Activated naive CD4-positive, alpha-beta T cell treated with anti-CD3 and anti-CD28 coated beads for 36 hours (primary cell): ENCODE measurements at regions of chr12 and their contacts with region 1.

Region 1: GRCh38 chr12:55926738-55927587 is 731 bp downstream of the PYM1 start:
- DNase-seq: peak; percentile 96
- H3K4me3 Mint-ChIP-seq: peak overlapping the region; percentile 99
- H3K27ac Mint-ChIP-seq: peak overlapping the region; percentile 100
- H3K4me1 Mint-ChIP-seq: peaks cover 44% of the 10 kb centered on the region
- H3K27me3 Mint-ChIP-seq: no peaks in the 10 kb centered on the region

Region 2: DNA sequence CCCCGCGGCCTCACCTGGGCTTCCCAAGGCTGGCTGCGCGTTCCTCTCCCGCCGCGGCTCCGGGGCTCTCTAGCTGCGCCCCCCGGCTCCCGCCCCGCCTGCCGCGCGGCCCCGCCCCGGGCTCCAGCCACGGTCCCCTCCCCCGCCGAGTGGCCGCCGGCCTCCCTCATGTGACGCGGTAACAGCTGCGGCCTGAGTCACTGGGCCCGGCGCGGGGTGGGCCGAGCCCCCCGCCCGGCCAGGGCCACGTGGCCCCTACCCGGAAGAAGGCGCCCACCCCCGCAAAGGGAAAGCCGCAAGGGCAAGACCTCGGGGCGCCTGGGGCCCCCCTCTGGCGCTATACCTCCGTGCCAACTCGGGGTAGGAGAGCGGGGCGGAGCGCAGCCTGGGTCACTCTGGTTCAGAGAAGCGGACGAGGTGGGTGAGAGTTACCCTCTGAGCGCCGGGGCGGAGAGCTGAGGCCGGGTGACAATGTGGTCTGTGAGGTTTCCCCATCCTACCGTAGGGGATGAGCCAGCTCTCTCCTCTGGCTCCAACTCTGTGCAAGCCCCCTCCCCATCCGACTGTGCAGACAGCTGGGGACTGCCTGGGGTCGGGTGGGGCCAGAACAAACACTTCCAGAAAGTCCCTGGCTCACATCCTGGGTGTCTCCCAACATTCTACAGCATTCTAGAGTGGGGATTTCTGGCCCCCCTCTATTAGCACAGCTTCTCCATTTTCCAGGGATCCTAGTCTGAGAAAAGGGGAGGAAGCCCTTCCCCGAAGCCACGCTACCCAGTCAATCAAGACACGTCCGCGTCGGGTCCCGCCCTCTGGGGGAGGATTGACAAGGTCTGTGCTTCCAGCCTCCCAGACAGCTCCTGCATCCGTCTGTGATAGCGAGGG is 197.8 kb before region 1 on chr12 and contains the start of gene CD63:
- CTCF ChIA-PET with region 1: interaction called, 5 read pairs
- intact Hi-C with region 1: loop called (anchors 2 kb)
- DNase-seq: peak; percentile 81
- H3K4me3 Mint-ChIP-seq: peak within 1 kb of the TSS; percentile 90
- H3K27ac Mint-ChIP-seq: peak within 1 kb of the TSS; percentile 87
- H3K4me1 Mint-ChIP-seq: peaks cover 29% of the 10 kb centered on the region
- H3K27me3 Mint-ChIP-seq: no peaks in the 10 kb centered on the region
- total RNA-seq, gene CD63: 62.3 to 73.6 TPM

Region 3: DNA sequence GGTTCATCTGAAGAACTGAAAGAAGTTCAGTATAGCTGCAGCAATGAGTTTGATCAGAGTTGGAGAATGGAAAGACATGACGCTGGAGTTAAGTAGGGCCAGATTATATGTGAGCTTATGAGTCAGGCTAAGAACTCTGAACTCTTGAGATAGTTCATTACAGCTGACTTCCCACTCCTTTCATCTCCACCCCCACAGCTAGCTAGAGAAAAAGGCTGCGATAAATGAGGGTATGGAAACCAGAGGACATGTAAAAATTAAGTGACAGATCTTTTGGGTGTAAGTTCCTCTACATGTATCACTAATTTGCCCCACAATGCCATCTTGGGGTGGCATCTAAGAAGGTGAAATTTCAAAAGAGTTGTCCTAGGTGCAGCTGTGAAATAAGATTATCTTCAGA is 27.9 kb before region 1 on chr12:
- CTCF ChIA-PET with region 1: interaction called, 6 read pairs
- intact Hi-C with region 1: loop called (anchors 2 kb)
- DNase-seq: peak; percentile 71
- H3K4me3 Mint-ChIP-seq: no peak overlapping the region
- H3K27ac Mint-ChIP-seq: peak overlapping the region; percentile 70
- H3K4me1 Mint-ChIP-seq: peaks cover 13% of the 10 kb centered on the region
- H3K27me3 Mint-ChIP-seq: no peaks in the 10 kb centered on the region

Region 4: GRCh38 chr12:55973598-55974307 is 46.8 kb after region 1 on chr12 and contains the start of gene RAB5B:
- CTCF ChIA-PET with region 1: interaction called, 5 read pairs
- intact Hi-C with region 1: loop called (anchors 1 kb)
- DNase-seq: peak; percentile 99
- H3K4me3 Mint-ChIP-seq: no peak within 1 kb of the TSS
- H3K27ac Mint-ChIP-seq: no peak within 1 kb of the TSS
- H3K4me1 Mint-ChIP-seq: peaks cover 24% of the 10 kb centered on the region
- H3K27me3 Mint-ChIP-seq: no peaks in the 10 kb centered on the region
- total RNA-seq, gene RAB5B: 33.2 to 35.7 TPM

Region 5: DNA sequence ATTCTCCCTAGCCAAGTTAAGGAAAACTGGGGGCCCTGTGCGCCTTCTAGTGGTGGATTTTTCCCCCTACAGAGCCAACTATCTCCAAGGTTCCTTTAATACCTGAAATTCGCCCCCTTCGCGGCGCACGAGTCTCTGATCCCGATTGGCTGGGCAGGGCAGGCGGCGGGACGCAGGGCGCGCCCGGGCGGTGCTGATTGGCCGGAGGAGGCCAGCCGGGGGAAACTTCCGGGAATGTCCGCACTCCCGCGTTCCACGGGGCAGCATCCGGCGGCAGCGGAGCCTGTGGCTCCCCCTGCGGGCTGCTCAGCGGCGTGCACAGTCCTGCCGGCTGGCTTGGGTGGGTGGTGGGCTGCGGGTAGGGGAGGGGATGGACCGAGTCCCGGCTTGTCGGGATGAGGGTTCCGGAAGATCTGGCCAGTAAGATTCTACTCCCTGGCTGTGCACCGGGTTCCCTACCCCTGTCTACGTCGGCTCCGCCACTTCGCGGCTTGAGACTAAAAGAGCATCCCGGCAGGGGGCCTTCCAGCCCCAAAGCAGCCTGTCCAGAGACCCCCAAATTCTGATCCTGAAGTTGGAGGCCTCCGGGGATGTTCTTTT is 297.2 kb after region 1 on chr12 and contains the start of gene NABP2:
- CTCF ChIA-PET with region 1: no interaction called
- intact Hi-C with region 1: loop called (anchors 5 kb)
- DNase-seq: peak; percentile 97
- H3K4me3 Mint-ChIP-seq: peak within 1 kb of the TSS; percentile 99
- H3K27ac Mint-ChIP-seq: peak within 1 kb of the TSS; percentile 93
- H3K4me1 Mint-ChIP-seq: peaks cover 37% of the 10 kb centered on the region
- H3K27me3 Mint-ChIP-seq: no peaks in the 10 kb centered on the region
- total RNA-seq, gene NABP2: 57.4 to 59.0 TPM

Region 6: GRCh38 chr12:56688129-56688845 is 761.3 kb after region 1 on chr12 and contains the start of gene PTGES3:
- CTCF ChIA-PET with region 1: no interaction called
- intact Hi-C with region 1: loop called (anchors 1 kb)
- DNase-seq: peak; percentile 99
- H3K4me3 Mint-ChIP-seq: peak within 1 kb of the TSS; percentile 90
- H3K27ac Mint-ChIP-seq: peak within 1 kb of the TSS; percentile 99
- H3K4me1 Mint-ChIP-seq: peaks cover 19% of the 10 kb centered on the region
- H3K27me3 Mint-ChIP-seq: no peaks in the 10 kb centered on the region
- total RNA-seq, gene PTGES3: 289 to 293 TPM